ENCODE measurements at regions of chr19 and their contacts with region 1.

Region 1: DNA sequence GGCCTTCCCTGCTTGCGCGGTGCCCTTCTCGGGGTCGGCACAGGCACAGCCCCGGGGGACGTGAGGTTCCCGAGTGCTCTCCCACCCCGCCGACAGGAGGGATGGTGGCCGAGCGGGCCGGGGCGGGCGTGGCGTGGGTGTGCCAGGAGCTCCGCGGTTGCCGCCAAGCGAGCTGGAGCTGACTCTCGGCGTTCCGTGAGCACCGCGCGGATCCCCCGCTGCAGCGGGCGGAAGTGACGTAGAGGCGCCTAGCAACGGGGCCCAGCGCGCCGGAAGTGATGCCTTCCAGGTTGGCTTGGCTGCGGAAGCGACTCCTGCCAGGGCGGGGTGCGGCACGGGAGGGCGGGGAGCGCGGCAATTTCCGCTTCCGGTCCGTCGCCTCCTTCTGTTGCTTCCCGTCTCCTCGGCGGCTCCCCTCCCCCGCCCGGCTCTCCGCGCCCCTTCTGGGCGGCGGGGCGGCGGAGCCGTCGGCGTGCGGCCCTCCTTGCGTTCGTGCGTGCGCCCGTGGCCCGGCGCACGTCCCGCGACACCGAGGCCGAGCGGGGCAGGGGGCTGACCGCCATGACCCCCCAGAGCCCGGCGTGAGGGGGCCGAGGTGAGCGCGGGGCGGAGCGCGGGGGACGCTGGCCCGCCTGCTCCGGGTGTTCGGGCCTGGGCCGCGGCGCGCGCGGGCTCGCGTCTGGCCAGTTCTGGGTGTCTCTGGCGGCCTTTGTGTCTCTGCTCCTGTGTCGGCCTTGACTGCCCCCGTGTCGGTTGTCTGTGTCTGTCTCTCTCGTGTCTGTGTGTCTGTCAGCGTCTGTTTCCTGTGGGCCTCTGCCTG is at the start of gene EPN1:
- DNase-seq: peak; percentile 99
- H3K4me3 Mint-ChIP-seq: peak within 1 kb of the TSS; percentile 95
- H3K27ac Mint-ChIP-seq: peak within 1 kb of the TSS; percentile 90
- H3K4me1 Mint-ChIP-seq: peaks cover 52% of the 10 kb centered on the region
- H3K27me3 Mint-ChIP-seq: no peaks in the 10 kb centered on the region
- total RNA-seq, gene EPN1: 44.7 and 45.4 TPM in 2 replicates

Region 2: DNA sequence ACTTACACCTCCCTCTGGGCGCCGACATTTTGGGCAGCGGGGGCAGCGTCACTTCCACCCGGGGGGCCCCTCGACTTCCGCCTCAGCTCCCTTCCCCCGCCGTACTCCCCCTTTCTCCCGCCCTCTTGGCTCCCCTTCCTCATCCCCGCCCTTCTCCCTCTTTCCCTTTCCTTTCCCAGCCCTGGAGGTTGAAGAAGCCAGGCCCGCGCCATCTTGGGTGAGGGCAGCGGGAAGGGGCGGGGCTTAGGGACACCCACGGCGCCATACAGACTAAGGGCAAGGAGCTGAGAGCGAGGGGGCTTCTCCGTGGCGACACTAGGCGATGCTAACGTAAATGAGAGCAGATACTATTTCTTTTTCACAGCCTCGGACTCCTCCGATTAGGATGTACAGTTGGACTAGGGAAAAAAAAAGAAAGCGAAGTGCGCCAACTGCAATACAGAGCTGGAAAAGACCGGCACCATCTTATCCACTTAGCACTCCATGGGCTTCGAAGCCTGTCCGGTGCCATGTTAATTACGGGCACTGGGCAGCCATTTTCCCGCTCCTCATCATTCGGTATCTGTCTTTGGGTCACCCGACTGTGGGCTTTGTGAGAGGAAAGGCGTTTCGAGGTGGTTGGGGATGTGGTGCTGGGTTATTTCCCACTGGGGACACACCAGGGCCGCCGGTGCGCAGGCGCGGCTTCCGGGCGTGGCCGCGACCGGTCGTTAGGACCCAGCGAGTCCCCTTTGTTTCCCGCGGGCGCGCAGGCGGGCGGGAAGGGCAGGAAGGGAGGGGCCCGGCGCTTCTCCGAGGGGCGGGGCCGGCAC is 75.4 kb before region 1 on chr19 and contains the start of gene FIZ1:
- intact Hi-C with region 1: no loop called
- DNase-seq: peak; percentile 99
- H3K4me3 Mint-ChIP-seq: peak within 1 kb of the TSS; percentile 88
- H3K27ac Mint-ChIP-seq: peak within 1 kb of the TSS; percentile 98
- H3K4me1 Mint-ChIP-seq: peaks cover 33% of the 10 kb centered on the region
- H3K27me3 Mint-ChIP-seq: no peaks in the 10 kb centered on the region
- total RNA-seq, gene FIZ1: 20.4 and 21.4 TPM in 2 replicates

Region 3: GRCh38 chr19:55620410-55621204 is 54.4 kb before region 1 on chr19:
- intact Hi-C with region 1: no loop called
- DNase-seq: no peak
- H3K4me3 Mint-ChIP-seq: no peak overlapping the region
- H3K27ac Mint-ChIP-seq: no peak overlapping the region
- H3K4me1 Mint-ChIP-seq: peaks cover 26% of the 10 kb centered on the region
- H3K27me3 Mint-ChIP-seq: no peaks in the 10 kb centered on the region

Region 4: DNA sequence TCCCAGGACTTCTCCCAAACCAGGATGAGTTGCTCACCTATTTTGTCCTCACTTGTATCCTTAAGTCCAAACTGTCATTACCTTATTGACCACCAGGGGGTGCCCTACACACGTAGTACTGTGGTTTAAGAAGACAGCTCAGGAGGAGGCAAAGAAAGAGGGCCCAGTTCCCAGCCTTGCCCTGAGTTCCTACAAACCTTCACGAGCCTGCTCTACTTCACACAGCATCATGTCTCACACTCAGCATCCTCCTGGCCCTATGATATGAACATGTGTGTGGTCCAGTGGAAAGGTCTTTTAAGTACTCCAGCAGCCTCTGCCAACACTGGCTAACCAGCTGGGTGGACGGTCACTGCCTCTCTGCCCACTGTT is 42.6 kb before region 1 on chr19:
- intact Hi-C with region 1: loop called (anchors 2 kb)
- DNase-seq: peak; percentile 97
- H3K4me3 Mint-ChIP-seq: no peak overlapping the region
- H3K27ac Mint-ChIP-seq: peak overlapping the region; percentile 3
- H3K4me1 Mint-ChIP-seq: peaks cover 38% of the 10 kb centered on the region
- H3K27me3 Mint-ChIP-seq: peaks cover 13% of the 10 kb centered on the region

Region 5: GRCh38 chr19:55643348-55644176 is 31.5 kb before region 1 on chr19 and contains the start of gene ZNF581:
- intact Hi-C with region 1: loop called (anchors 1 kb)
- DNase-seq: peak; percentile 95
- H3K4me3 Mint-ChIP-seq: peak within 1 kb of the TSS; percentile 90
- H3K27ac Mint-ChIP-seq: peak within 1 kb of the TSS; percentile 98
- H3K4me1 Mint-ChIP-seq: peaks cover 27% of the 10 kb centered on the region
- H3K27me3 Mint-ChIP-seq: no peaks in the 10 kb centered on the region
- total RNA-seq, gene ZNF581: 32.7 and 33.0 TPM in 2 replicates

Region 6: GRCh38 chr19:55702131-55702627 is 27.1 kb after region 1 on chr19:
- intact Hi-C with region 1: no loop called
- DNase-seq: no peak
- H3K4me3 Mint-ChIP-seq: no peak overlapping the region
- H3K27ac Mint-ChIP-seq: no peak overlapping the region
- H3K4me1 Mint-ChIP-seq: no peaks in the 10 kb centered on the region
- H3K27me3 Mint-ChIP-seq: no peaks in the 10 kb centered on the region

Region 7: GRCh38 chr19:56140583-56141416 is 465.7 kb after region 1 on chr19 and contains the start of gene ZNF444:
- intact Hi-C with region 1: loop called (anchors 1 kb)
- DNase-seq: peak; percentile 100
- H3K4me3 Mint-ChIP-seq: peak within 1 kb of the TSS; percentile 94
- H3K27ac Mint-ChIP-seq: peak within 1 kb of the TSS; percentile 91
- H3K4me1 Mint-ChIP-seq: peaks cover 36% of the 10 kb centered on the region
- H3K27me3 Mint-ChIP-seq: peaks cover 4% of the 10 kb centered on the region
- total RNA-seq, gene ZNF444: 35.5 and 35.7 TPM in 2 replicates

Measured in activated CD4-positive, alpha-beta T cell treated with anti-CD3 and anti-CD28 coated beads, Interleukin-2, amount 10 ng/mL, durations not matched to agents 24 days and 14 days (primary cell).